Ovary (tissue), 10 donors: ENCODE measurements at regions of chr17 and their contacts with region 1.

Region 1: GRCh38 chr17:21126645-21127510 is at the start of gene DHRS7B:
- DNase-seq: peak; percentile 93 to 96 (median 95)
- H3K4me3 ChIP-seq: peak within 1 kb of the TSS; percentile 78
- H3K27ac ChIP-seq: peak within 1 kb of the TSS; percentile 18 to 56
- H3K4me1 ChIP-seq: peaks cover 3% of the 10 kb centered on the region
- H3K27me3 ChIP-seq: no peaks in the 10 kb centered on the region
- CTCF ChIP-seq: no peak
- EP300 ChIP-seq: no peak
- POLR2A ChIP-seq: peak; percentile 41
- total RNA-seq, gene DHRS7B: 10.7 to 27.9 (median 13.6) TPM

Region 2: DNA sequence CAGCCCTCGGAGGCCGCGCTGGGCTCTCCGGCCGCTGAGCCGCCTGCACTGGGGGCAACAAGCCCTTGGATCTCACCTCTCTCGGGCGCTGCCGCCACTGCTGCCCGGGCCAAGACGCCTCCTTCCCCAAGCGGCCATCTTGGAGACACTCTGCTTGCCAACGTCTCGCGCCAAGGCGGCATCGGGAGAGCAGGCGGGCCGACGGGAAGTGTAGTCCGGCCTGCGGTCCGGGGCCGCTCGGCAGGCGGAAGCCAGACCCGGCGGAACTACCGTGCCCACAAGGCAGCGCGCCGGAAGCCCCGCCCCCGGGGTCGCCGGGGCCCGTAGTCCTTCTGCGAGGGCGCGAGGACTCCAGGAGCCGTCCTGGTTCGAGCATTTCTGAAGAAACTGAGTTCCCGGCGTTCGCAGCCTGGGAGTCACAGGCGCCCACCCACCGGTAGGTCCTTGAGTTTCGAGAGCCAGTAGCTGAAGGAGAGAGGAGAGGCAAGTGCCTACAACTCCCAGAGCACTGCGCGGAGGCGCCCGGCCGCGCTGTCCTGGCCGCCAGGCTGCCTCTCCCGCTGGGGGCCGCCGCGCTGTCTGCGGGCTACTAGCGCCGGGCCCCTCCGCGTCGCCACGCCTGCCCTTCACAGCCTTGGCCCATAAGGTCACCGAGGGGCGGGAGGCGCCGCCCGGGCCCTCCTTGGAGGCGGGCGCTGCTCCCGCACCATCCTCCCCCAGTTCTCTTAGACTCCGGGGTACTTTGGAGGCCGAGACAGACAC is 87.3 kb after region 1 on chr17 and contains the start of gene TMEM11:
- intact Hi-C with region 1: loop called in 1 of 4 experiments (anchors 10 kb)
- DNase-seq: peak; percentile 94 to 97 (median 95)
- H3K4me3 ChIP-seq: peak within 1 kb of the TSS; percentile 93
- H3K27ac ChIP-seq: peak within 1 kb of the TSS; percentile 61 to 92
- H3K4me1 ChIP-seq: peaks cover 14% of the 10 kb centered on the region
- H3K27me3 ChIP-seq: no peaks in the 10 kb centered on the region
- CTCF ChIP-seq: peak in 1 of 3 donors; percentile 40
- EP300 ChIP-seq: no peak
- POLR2A ChIP-seq: peak; percentile 56
- total RNA-seq, gene TMEM11: 10.5 to 18.5 (median 15.8) TPM

Region 3: GRCh38 chr17:21252796-21253645 is 126.1 kb after region 1 on chr17 and contains the start of gene NATD1:
- intact Hi-C with region 1: loop called in 2 of 4 experiments (anchors 10 kb)
- DNase-seq: peak; percentile 78 to 89 (median 85)
- H3K4me3 ChIP-seq: peak within 1 kb of the TSS; percentile 56
- H3K27ac ChIP-seq: peak within 1 kb of the TSS in 1 of 2 donors; percentile 42
- H3K4me1 ChIP-seq: peaks cover 6% of the 10 kb centered on the region
- H3K27me3 ChIP-seq: no peaks in the 10 kb centered on the region
- CTCF ChIP-seq: no peak
- EP300 ChIP-seq: no peak
- POLR2A ChIP-seq: no peak
- total RNA-seq, gene NATD1: 2.8 to 9.0 (median 5.2) TPM

Region 4: DNA sequence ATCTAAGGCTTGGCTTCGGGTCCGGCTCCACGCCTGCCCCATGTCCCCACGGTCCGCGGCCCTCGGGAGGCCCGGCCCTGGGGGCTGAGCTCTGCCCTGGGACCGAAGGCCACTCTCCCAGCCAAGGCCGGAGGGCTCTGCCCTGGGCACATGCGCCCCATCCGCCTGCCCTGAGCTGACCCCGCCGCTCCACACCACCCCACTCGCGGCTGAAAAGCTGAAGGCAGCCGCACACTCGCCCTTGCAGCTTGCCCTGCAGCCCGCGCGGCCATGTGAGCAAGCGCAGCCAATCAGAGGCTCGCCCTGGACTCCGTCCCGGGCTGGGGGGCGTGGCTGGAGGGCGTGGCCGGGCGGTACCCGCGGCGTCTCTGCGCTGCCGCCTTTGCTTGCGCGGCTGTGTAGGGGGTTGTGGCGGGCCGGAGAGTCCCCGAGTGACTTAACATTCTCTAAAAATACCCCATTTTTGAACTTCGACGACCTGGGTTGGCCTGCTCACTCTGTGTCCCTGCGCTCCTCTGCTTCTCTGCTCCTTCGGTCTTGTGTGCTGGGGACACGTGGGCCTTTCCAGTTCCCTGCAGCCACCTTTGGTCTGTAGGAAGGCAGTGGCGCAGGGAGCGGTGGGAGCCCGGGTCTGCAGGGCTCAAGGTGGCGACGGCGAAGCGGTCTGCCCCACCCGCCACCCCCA is 148.8 kb after region 1 on chr17:
- intact Hi-C with region 1: loop called in 2 of 4 experiments (anchors 10 kb)
- DNase-seq: peak; percentile 87 to 95 (median 93)
- H3K4me3 ChIP-seq: peak overlapping the region; percentile 67
- H3K27ac ChIP-seq: peak overlapping the region in 1 of 2 donors; percentile 40
- H3K4me1 ChIP-seq: no peaks in the 10 kb centered on the region
- H3K27me3 ChIP-seq: no peaks in the 10 kb centered on the region
- CTCF ChIP-seq: peak in 1 of 3 donors; percentile 19
- EP300 ChIP-seq: no peak
- POLR2A ChIP-seq: no peak

Region 5: DNA sequence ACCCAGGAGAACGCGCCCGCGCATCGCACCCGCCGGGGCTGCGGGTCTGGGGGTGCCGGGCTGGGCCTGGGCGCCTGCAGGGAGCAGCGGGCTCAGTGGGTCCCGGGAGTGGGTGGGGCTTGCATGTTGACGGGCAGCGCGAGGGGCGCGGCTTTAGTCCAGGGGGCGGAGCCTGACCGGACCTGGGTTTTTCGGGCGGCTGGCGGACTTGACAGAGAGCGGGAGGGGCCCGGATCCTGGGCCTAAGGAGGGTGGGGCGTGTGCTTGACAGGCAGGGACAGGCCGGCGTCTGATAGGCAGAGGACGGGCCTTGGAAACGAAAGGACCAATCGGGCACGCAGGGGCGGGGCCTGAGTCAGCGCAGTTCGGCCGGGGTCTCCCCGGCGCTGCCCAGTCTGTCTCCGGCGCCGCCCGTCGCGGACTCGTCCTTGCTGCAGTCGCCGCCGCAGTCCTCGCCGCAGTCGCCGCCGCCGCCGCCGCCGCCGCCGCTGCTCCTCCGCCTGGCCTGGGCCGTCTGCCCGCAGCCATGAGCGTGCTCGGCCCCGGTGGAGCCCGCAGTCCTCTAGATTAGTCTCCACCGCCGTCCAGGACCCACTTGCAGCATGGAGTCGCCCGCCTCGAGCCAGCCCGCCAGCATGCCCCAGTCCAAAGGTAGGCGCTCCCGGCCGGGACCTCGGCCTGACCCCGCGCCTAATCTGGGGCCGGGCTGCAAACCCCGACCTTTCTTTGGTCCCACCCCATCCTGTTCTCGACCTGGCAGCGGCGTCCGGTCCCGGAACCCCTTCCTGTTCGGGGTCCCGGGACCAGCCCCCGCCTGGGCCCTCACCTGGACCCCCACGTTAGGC is 157.7 kb after region 1 on chr17 and contains the start of gene MAP2K3:
- intact Hi-C with region 1: loop called in 2 of 4 experiments (anchors 10 kb)
- DNase-seq: peak; percentile 99
- H3K4me3 ChIP-seq: peak within 1 kb of the TSS; percentile 57
- H3K27ac ChIP-seq: peak within 1 kb of the TSS; percentile 1 to 65
- H3K4me1 ChIP-seq: peaks cover 24% of the 10 kb centered on the region
- H3K27me3 ChIP-seq: no peaks in the 10 kb centered on the region
- CTCF ChIP-seq: no peak
- EP300 ChIP-seq: no peak
- POLR2A ChIP-seq: peak; percentile 80
- total RNA-seq, gene MAP2K3: 9.1 to 45.5 (median 18.9) TPM

Region 6: DNA sequence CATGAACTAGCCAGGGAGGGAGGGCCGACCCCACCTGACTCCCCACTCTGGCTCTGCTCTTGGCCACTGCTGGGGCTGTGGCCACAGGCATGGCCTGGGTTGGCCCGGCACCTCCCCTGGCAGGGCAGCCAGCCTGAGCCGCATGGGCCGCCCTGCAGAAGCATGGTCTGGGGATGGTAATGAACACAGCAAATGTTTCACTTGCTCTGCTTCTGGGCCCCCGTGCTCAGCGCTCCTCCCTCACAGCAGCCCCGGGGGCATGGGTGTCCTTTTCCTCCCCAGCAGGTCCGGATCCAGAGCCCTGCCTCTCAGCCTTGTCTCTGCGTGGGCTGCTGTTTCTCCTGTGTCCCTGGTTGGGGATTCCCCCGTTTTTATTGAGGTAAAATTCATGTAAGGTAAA is 218.4 kb after region 1 on chr17:
- intact Hi-C with region 1: no loop called
- DNase-seq: peak in 2 of 5 donors; percentile 13 to 32
- H3K4me3 ChIP-seq: no peak overlapping the region
- H3K27ac ChIP-seq: no peak overlapping the region
- H3K4me1 ChIP-seq: no peaks in the 10 kb centered on the region
- H3K27me3 ChIP-seq: no peaks in the 10 kb centered on the region
- CTCF ChIP-seq: no peak
- EP300 ChIP-seq: no peak
- POLR2A ChIP-seq: no peak

Region 7: GRCh38 chr17:21814776-21815175 is 687.9 kb after region 1 on chr17:
- intact Hi-C with region 1: no loop called
- DNase-seq: no peak
- H3K4me3 ChIP-seq: no peak overlapping the region
- H3K27ac ChIP-seq: no peak overlapping the region
- H3K4me1 ChIP-seq: no peaks in the 10 kb centered on the region
- H3K27me3 ChIP-seq: no peaks in the 10 kb centered on the region
- CTCF ChIP-seq: no peak
- EP300 ChIP-seq: no peak
- POLR2A ChIP-seq: no peak